ENCODE measurements at regions of chr5 and their contacts with region 1.

Region 1: GRCh38 chr5:180291943-180292831 is at the start of gene MAPK9:
- DNase-seq: peak; percentile 74 to 89
- H3K4me3 ChIP-seq: peak within 1 kb of the TSS; percentile 70 to 76
- H3K27ac ChIP-seq: peak within 1 kb of the TSS; percentile 79 to 80
- H3K4me1 ChIP-seq: peaks cover 0 to 37% (median 21%) of the 10 kb centered on the region in 4 donors
- H3K27me3 ChIP-seq: no peaks in the 10 kb centered on the region
- CTCF ChIP-seq: no peak

Region 2: GRCh38 chr5:179821581-179822432 is 470.4 kb before region 1 on chr5:
- intact Hi-C with region 1: loop called (anchors 5 kb)
- DNase-seq: peak; percentile 98 to 99
- H3K4me3 ChIP-seq: peak overlapping the region; percentile 99 to 100
- H3K27ac ChIP-seq: peak overlapping the region; percentile 100
- H3K4me1 ChIP-seq: peaks cover 10 to 85% (median 71%) of the 10 kb centered on the region in 4 donors
- H3K27me3 ChIP-seq: no peaks in the 10 kb centered on the region
- CTCF ChIP-seq: no peak

Region 3: GRCh38 chr5:180026320-180026719 is 265.9 kb before region 1 on chr5:
- intact Hi-C with region 1: no loop called
- DNase-seq: no peak
- H3K4me3 ChIP-seq: no peak overlapping the region
- H3K27ac ChIP-seq: no peak overlapping the region
- H3K4me1 ChIP-seq: peaks cover 0 to 8% (median 4%) of the 10 kb centered on the region in 4 donors
- H3K27me3 ChIP-seq: no peaks in the 10 kb centered on the region
- CTCF ChIP-seq: no peak

Region 4: DNA sequence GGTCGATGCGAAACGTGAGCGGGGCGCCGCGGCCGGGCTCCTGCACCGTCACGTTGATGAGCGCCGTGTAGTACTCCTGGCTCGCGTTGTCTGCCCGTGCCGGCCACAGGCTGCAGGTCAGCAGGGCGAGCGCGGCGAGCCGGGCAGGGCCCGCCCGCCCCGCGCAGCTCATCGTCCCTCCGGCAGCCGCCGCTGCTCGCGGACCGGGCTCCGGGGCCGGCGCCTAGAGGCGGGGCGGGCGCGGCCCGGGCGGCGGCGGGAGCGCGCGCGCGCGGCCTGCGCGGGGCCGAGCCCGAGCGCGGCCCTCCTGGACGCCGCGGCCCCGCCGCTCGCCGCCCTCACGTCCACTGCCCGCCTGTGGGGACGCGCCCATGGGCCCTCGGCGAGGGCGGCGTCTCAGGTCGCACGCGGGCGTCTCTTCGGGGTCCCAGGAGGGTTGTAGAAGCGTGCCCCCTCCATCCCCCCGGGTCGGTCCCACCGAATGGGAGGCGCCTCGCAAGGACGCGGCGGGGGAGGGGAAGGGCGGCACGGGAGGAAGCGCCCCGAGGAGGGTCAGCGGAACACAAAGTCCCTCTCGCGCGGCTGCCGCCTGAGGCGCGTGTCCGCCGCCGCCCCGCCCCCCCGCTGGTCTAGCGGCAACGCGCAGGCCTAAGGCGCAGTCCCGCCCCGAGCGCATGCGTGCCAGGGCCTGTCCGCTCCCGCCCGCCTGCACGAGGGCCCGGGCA is 220.5 kb before region 1 on chr5 and contains the start of gene RNF130:
- intact Hi-C with region 1: no loop called
- DNase-seq: peak; percentile 89 to 97
- H3K4me3 ChIP-seq: peak within 1 kb of the TSS; percentile 96 to 97
- H3K27ac ChIP-seq: peak within 1 kb of the TSS; percentile 93 to 99
- H3K4me1 ChIP-seq: peaks cover 0 to 22% (median 16%) of the 10 kb centered on the region in 4 donors
- H3K27me3 ChIP-seq: no peaks in the 10 kb centered on the region
- CTCF ChIP-seq: no peak

Region 5: DNA sequence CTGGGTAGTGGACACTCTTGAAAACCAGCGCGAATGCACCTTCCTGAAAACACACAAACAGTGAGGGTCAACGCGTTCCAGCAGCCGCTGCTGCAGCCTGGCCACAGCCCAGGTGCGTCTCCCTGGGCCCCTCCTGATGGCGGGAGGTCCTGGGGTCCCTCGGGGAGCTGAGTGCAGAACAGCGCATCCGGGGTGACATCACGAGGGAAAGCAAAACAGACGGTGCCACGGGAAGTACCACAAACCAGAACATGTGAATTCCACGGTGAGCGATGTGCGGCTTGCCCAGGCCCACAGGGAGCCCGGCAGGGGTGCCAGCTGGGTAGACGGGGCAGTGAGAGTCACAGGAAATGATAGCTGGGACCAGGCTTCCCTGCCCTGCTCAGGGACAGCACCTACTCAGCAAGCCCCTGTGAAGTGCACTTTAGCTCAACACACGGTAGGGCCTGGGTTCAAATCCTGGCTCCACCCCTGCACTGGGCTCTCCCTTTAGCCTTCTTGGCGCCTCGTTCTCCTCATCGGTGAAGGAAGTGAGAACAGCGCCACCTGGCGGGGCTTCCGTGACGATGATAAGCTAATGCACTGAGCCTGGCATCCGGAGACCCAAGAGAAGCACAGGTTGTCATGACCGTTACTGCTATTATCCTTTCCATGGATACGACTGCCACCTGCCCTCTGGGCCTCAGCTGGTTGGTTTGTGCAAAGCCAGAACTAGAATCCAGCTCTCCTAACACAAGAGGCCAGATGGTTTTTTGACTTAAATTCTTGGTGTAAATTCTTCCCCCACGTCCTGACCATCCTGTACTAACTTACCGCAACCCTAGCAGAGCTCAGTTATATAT is 36.3 kb after region 1 on chr5:
- intact Hi-C with region 1: loop called (anchors 5 kb)
- DNase-seq: peak; percentile 84 to 88
- H3K4me3 ChIP-seq: no peak overlapping the region
- H3K27ac ChIP-seq: no peak overlapping the region
- H3K4me1 ChIP-seq: peaks cover 0 to 6% (median 2%) of the 10 kb centered on the region in 4 donors
- H3K27me3 ChIP-seq: no peaks in the 10 kb centered on the region
- CTCF ChIP-seq: peak; percentile 69

Region 6: DNA sequence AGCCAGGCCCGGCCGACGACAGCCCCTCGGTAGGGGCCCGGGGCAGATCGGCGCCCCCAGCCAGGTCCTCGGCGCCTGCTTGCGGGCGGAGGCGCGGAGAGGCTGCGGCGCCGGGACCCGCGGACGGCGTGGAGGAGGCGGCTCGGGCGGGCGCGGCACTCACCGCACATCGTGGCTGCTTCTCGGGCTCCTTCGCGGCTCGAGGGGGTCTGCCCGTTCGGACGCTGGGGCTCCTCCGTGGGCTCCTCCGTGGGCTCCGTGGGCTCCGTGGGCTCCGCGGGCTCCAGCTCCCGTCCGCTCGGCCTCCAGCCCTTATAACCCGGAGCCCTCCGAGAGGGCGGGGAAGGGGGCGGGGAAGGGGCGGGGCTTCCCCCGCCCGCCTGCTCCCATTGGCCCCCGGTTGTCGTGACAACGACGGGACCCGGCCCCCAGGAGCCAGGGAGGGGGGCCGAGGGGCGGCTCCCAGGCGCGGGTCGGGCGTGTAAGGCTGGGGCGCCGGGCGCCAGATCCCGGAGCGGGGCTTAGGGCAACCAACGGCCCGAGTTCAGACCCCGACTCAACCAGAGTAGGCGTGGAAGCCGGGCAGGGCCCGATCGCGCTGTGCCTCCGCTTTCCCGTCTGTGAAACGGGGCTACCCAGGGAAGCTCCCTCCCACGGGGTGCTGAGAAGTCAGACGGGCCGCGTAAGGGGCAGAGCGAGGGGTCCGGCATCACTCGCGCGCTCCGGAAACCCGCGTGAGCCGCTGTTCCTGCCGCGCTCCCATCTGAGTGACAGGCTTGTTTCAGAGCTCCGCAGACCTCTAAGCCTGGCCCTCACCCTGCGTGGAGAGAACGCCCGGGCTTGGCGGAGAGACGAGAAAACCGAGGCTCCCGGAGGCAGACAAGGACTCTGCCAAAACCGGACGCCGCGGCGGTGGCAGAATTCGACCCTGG is 61.1 kb after region 1 on chr5 and contains the start of gene GFPT2:
- intact Hi-C with region 1: loop called (anchors 2 kb)
- DNase-seq: peak; percentile 85 to 90
- H3K4me3 ChIP-seq: peak within 1 kb of the TSS; percentile 76 to 89
- H3K27ac ChIP-seq: peak within 1 kb of the TSS; percentile 66 to 77
- H3K4me1 ChIP-seq: peaks cover 0 to 23% (median 18%) of the 10 kb centered on the region in 4 donors
- H3K27me3 ChIP-seq: peaks cover 0 to 7% of the 10 kb centered on the region in 2 donors
- CTCF ChIP-seq: no peak

Region 7: GRCh38 chr5:180470966-180471582 is 178.9 kb after region 1 on chr5:
- intact Hi-C with region 1: loop called (anchors 5 kb)
- DNase-seq: peak in 1 of 2 donors; percentile 51
- H3K4me3 ChIP-seq: no peak overlapping the region
- H3K27ac ChIP-seq: no peak overlapping the region
- H3K4me1 ChIP-seq: no peaks in the 10 kb centered on the region
- H3K27me3 ChIP-seq: peaks cover 0 to 11% of the 10 kb centered on the region in 2 donors
- CTCF ChIP-seq: peak; percentile 82 to 92